GM12878 (cell line): ENCODE measurements at regions of chr12 and their contacts with region 1.

Region 1: DNA sequence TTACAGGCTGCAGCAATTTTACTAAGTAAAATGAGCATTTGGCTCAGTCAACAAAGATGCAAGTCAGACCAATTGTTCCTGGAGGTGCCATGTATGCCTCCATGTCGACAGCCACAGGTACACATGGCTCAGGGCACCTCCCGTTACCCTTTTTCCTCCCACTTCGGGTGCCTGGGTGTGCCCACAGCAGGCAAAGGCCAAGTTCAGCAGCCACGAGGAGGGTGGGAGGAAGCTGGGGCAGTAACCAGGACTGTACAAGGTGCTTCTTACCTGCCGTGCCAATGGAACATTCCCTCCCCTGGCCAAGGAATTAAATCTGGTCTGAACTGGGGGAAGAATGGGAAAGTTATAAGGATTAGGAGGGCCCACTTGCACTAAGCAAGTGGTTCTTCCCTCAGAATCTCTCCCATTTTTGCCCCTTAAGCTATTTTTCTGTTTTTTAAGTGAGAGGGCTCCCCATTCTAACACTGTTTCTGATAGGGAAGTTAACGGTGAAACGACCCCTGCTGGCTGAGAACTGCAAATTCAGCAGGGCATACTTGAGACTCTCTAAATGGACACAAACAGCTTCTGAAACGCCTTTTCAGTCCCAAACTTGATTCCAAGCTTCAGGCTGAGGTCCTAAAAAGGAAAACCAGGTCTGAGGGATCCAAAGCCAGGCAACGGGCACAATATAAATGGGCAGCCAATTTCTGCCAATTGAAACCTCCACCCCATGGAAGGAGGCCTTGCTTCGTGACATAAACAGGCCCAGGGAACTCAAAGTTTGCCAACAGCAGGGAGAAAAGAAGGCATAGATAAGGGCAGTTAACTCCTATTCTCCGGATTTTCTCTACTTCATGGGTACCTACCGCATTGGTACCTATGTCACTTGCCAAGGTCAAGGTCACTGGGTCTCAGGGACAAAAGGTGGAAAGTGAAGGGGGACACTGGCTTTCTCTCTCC is 24.8 kb downstream of the CLECL1 start:
- DNase-seq: no peak
- ATAC-seq: peak; percentile 90
- H3K4me3 ChIP-seq: no peak overlapping the region
- H3K27ac ChIP-seq: peak overlapping the region; percentile 71
- H3K4me1 ChIP-seq: peaks cover 51% of the 10 kb centered on the region
- H3K27me3 ChIP-seq: no peaks in the 10 kb centered on the region
- CTCF ChIP-seq: peak; percentile 72 to 88 (median 77)
- EP300 ChIP-seq: no peak
- POLR2A ChIP-seq: no peak
- RAD21 ChIP-seq: peak; percentile 77

Region 2: DNA sequence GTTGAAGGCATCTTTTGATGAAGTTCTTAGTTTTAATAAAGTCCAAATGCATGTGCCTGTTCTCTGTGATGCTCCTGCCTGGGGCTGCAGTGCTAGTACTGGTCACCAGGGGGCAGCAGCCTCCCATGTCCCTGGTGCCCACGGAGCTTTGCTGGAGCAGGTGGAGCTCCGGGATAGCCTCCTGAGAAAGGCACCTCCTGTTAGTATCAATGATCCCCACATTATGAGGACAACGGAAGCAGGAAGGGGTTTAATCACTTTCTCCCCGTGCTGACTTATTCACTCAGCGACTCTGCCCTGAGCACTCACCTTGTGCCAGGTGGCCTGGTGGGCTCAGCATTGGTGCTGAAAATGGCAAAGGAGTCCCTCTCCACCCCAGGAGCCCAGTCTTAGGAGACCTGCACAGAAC is 376.9 kb before region 1 on chr12:
- CTCF ChIA-PET with region 1: interaction called, 15 read pairs
- POLR2A ChIA-PET with region 1: no interaction called
- RAD21 ChIA-PET with region 1: interaction called, 5 read pairs
- SMC1A ChIA-PET with region 1: interaction called, 6 read pairs
- in situ Hi-C with region 1: no loop called
- intact Hi-C with region 1: loop called (anchors 1 kb)
- DNase-seq: peak; percentile 23
- ATAC-seq: peak; percentile 93
- H3K4me3 ChIP-seq: no peak overlapping the region
- H3K27ac ChIP-seq: peak overlapping the region; percentile 53
- H3K4me1 ChIP-seq: peaks cover 22% of the 10 kb centered on the region
- H3K27me3 ChIP-seq: no peaks in the 10 kb centered on the region
- CTCF ChIP-seq: peak; percentile 94 to 99 (median 98)
- EP300 ChIP-seq: no peak
- POLR2A ChIP-seq: no peak
- RAD21 ChIP-seq: peak; percentile 97

Region 3: DNA sequence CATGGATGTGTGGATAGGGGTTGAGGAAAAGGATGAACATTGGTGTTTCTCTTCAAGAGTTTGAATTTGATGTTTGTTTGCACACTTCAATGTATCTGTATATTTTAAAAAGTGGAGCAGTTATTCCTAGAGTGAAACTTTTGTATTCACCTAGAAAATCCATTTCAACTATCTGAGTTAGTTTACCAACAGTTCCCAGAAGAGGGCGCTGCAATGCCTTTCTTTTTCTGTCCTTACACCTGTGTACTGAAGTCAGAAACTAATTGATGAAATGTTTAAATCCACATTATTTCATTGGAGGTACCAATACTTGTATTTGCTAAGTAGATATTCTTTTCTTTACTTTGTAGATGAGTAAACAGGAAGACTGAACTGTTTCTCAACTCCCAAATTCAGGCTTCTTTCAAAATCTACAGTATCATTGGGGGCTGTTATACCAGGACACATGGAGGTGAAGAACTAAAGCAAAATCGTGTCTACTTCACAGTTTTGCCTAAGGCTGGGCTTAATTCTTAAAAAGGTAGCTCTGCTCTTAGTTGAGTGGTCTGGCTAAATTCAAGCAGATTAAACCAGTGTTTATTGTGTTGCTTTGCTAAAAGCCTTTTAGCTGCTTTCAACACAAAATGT is 73.8 kb before region 1 on chr12:
- CTCF ChIA-PET with region 1: interaction called, 159 read pairs
- POLR2A ChIA-PET with region 1: no interaction called
- RAD21 ChIA-PET with region 1: interaction called, 32 read pairs
- SMC1A ChIA-PET with region 1: interaction called, 100 read pairs
- in situ Hi-C with region 1: loop called (anchors 5 kb)
- intact Hi-C with region 1: loop called (anchors 1 kb)
- DNase-seq: no peak
- ATAC-seq: peak; percentile 79
- H3K4me3 ChIP-seq: no peak overlapping the region
- H3K27ac ChIP-seq: no peak overlapping the region
- H3K4me1 ChIP-seq: peaks cover 15% of the 10 kb centered on the region; the same call in 1 of the 2 replicates
- H3K27me3 ChIP-seq: no peaks in the 10 kb centered on the region
- CTCF ChIP-seq: peak; percentile 52 to 71 (median 61); a peak in 5 of 6 replicates
- EP300 ChIP-seq: no peak
- POLR2A ChIP-seq: no peak
- RAD21 ChIP-seq: peak; percentile 91

Region 4: GRCh38 chr12:9647825-9648700 is 60.1 kb before region 1 on chr12:
- CTCF ChIA-PET with region 1: interaction called, 7 read pairs
- POLR2A ChIA-PET with region 1: no interaction called
- RAD21 ChIA-PET with region 1: interaction called, 7 read pairs
- SMC1A ChIA-PET with region 1: interaction called, 8 read pairs
- in situ Hi-C with region 1: no loop called
- intact Hi-C with region 1: loop called (anchors 2 kb)
- DNase-seq: peak; percentile 89
- ATAC-seq: peak; percentile 88
- H3K4me3 ChIP-seq: peak overlapping the region; percentile 79
- H3K27ac ChIP-seq: peak overlapping the region; percentile 81
- H3K4me1 ChIP-seq: peaks cover 14% of the 10 kb centered on the region
- H3K27me3 ChIP-seq: no peaks in the 10 kb centered on the region
- CTCF ChIP-seq: no peak
- EP300 ChIP-seq: peak; percentile 44 to 52; a peak in 1 of 4 replicates
- POLR2A ChIP-seq: peak; percentile 79; the same call in 1 of the 2 replicates
- RAD21 ChIP-seq: no peak

Region 5: DNA sequence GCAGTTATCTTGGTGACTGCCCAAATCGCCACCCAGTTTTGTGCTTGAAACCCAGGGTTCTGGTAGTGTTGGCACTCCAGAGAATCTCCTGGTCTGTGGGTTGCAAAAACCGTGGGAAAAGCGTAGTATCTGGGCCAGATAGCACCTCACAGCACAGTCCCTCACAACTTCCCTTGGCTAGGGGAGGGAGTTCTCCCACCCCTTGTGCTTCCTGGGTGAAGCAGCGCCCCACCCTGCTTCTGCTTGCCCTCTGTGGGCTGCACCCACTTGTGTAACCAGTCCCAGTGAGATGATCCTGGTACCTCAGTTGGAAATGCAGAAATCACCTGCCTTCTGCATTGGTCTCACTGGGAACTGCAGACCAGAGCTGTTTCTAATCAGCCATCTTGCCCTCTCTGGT is 22.2 kb before region 1 on chr12:
- CTCF ChIA-PET with region 1: interaction called, 24 read pairs
- POLR2A ChIA-PET with region 1: interaction called, 3 read pairs
- RAD21 ChIA-PET with region 1: no interaction called
- SMC1A ChIA-PET with region 1: interaction called, 4 read pairs
- in situ Hi-C with region 1: no loop called
- intact Hi-C with region 1: no loop called
- DNase-seq: no peak
- ATAC-seq: no peak
- H3K4me3 ChIP-seq: no peak overlapping the region
- H3K27ac ChIP-seq: no peak overlapping the region
- H3K4me1 ChIP-seq: peaks cover 4% of the 10 kb centered on the region; the same call in 1 of the 2 replicates
- H3K27me3 ChIP-seq: peaks cover 0 to 1% of the 10 kb centered on the region in 2 experiments; a peak in 2 of 4 replicates
- CTCF ChIP-seq: no peak
- EP300 ChIP-seq: no peak
- POLR2A ChIP-seq: no peak
- RAD21 ChIP-seq: no peak

Region 6: DNA sequence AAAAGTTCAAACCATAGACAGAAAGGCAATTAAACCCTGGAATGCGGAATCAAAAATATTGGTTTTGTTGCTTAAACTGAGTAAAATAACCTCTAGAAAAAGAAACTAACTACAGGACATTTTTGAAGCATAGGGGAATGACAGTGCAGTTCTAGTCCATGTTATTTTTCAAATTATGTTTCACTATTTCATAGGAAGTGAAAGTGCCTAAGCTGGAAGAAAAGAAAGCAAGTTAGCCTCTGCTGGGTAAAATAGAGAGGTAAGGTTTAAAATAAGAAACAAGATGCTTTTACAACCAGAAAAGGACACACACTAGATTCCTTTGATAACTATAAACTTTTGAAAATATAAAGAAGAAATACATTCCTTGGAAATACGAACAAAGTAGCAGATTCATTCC is 23.7 kb after region 1 on chr12:
- CTCF ChIA-PET with region 1: interaction called, 4 read pairs
- POLR2A ChIA-PET with region 1: no interaction called
- RAD21 ChIA-PET with region 1: interaction called, 10 read pairs
- SMC1A ChIA-PET with region 1: interaction called, 6 read pairs
- in situ Hi-C with region 1: no loop called
- intact Hi-C with region 1: no loop called
- DNase-seq: no peak
- ATAC-seq: peak; percentile 73
- H3K4me3 ChIP-seq: peak overlapping the region; percentile 80
- H3K27ac ChIP-seq: peak overlapping the region; percentile 84
- H3K4me1 ChIP-seq: peaks cover 7% of the 10 kb centered on the region; the same call in 1 of the 2 replicates
- H3K27me3 ChIP-seq: no peaks in the 10 kb centered on the region
- CTCF ChIP-seq: no peak
- EP300 ChIP-seq: no peak
- POLR2A ChIP-seq: no peak
- RAD21 ChIP-seq: 0 out of 2 replicates have a peak, but pooled peaks have one; percentile 12

Region 7: GRCh38 chr12:9813821-9814809 is 106.0 kb after region 1 on chr12:
- CTCF ChIA-PET with region 1: no interaction called
- POLR2A ChIA-PET with region 1: no interaction called
- RAD21 ChIA-PET with region 1: no interaction called
- SMC1A ChIA-PET with region 1: no interaction called
- in situ Hi-C with region 1: no loop called
- intact Hi-C with region 1: no loop called
- DNase-seq: peak; percentile 23
- ATAC-seq: peak; percentile 100
- H3K4me3 ChIP-seq: peak overlapping the region; percentile 58; the same call in 1 of the 2 replicates
- H3K27ac ChIP-seq: no peak overlapping the region
- H3K4me1 ChIP-seq: no peaks in the 10 kb centered on the region
- H3K27me3 ChIP-seq: no peaks in the 10 kb centered on the region; a peak in 2 of 4 replicates
- CTCF ChIP-seq: peak; percentile 93 to 97 (median 93)
- EP300 ChIP-seq: no peak
- POLR2A ChIP-seq: no peak
- RAD21 ChIP-seq: peak; percentile 92